B cell (primary cell): ENCODE measurements at regions of chr1 and their contacts with region 1.

Region 1: DNA sequence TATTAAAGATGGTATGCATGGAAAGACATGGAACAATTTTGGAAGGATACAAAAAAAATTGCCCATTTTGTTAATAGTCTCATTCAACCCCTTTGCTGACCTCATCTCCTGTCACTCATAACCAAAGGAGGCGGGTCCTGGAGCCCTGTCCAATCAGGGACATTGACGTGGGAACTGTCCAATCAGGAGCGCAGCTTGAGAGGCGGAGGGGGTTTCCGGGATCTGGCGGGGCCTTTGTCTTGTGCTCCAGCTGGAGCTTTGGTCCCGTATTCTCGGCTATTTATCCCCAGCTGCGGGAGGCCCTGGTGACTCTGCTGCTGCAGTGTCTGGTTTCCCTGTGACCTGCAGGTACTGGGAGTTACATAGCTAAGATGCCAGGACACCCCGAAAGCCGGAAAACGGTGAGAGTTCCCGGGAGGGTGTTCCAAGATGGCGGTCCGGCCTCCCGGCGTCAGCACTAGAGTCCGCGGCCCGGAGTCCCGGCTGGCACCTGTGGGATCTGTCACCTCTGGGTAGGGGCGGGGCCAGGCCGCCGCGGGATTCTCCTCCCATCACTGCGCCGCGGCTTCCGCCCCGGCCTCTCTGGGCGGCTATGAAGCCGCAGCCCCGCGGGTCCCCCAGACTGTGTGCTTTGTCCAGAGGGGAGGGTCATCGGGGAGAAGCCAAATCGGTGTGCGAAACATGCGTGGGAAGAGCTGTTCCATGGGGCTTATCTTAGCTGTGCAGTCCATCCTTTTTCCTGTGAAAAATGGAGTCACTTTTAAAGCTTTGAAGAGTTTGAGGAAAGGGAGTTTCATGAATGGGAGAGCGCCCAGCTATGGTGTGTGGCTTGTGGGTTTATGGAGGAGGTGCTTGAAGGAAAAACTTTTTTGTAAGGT is at the start of gene ZNF678:
- DNase-seq: peak; percentile 94
- ATAC-seq: peak; percentile 88
- H3K4me3 ChIP-seq: peak within 1 kb of the TSS; percentile 74 to 87 (median 84)
- H3K4me3 Mint-ChIP-seq: peak within 1 kb of the TSS; percentile 98
- H3K27ac ChIP-seq: peak within 1 kb of the TSS; percentile 86 to 96
- H3K27ac Mint-ChIP-seq: peak within 1 kb of the TSS; percentile 93
- H3K4me1 ChIP-seq: peaks cover 22 to 31% of the 10 kb centered on the region in 2 donors
- H3K4me1 Mint-ChIP-seq: peaks cover 52% of the 10 kb centered on the region
- H3K27me3 ChIP-seq: peaks cover 0 to 30% (median 9%) of the 10 kb centered on the region in 4 experiments
- H3K27me3 Mint-ChIP-seq: peaks cover 16% of the 10 kb centered on the region
- CTCF ChIP-seq: no peak
- total RNA-seq, gene ZNF678: 16.0 and 20.3 TPM in 2 replicates

Region 2: GRCh38 chr1:227542143-227543120 is 21.1 kb before region 1 on chr1:
- CTCF ChIA-PET with region 1: interaction called, 21 read pairs
- POLR2A ChIA-PET with region 1: no interaction called
- intact Hi-C with region 1: loop called (anchors 2 kb)
- DNase-seq: peak; percentile 89
- ATAC-seq: peak; percentile 96
- H3K4me3 ChIP-seq: peak overlapping the region; percentile 7 to 69 (median 63)
- H3K4me3 Mint-ChIP-seq: peak overlapping the region; percentile 73
- H3K27ac ChIP-seq: peak overlapping the region in 1 of 2 donors; percentile 16
- H3K27ac Mint-ChIP-seq: no peak overlapping the region
- H3K4me1 ChIP-seq: peaks cover 0 to 16% of the 10 kb centered on the region in 2 donors
- H3K4me1 Mint-ChIP-seq: peaks cover 3% of the 10 kb centered on the region
- H3K27me3 ChIP-seq: no peaks in the 10 kb centered on the region
- H3K27me3 Mint-ChIP-seq: no peaks in the 10 kb centered on the region
- CTCF ChIP-seq: peak; percentile 99

Region 3: GRCh38 chr1:227734856-227735538 is 171.4 kb after region 1 on chr1 and contains the starts of genes JMJD4 and SNAP47:
- CTCF ChIA-PET with region 1: no interaction called
- POLR2A ChIA-PET with region 1: no interaction called
- intact Hi-C with region 1: loop called (anchors 2 kb)
- DNase-seq: peak; percentile 95
- ATAC-seq: peak; percentile 91
- H3K4me3 ChIP-seq: peak within 1 kb of the TSS; percentile 58 to 96 (median 83)
- H3K4me3 Mint-ChIP-seq: peak within 1 kb of the TSS; percentile 91
- H3K27ac ChIP-seq: peak within 1 kb of the TSS; percentile 55 to 90
- H3K27ac Mint-ChIP-seq: peak within 1 kb of the TSS; percentile 87
- H3K4me1 ChIP-seq: peaks cover 12 to 23% of the 10 kb centered on the region in 2 donors
- H3K4me1 Mint-ChIP-seq: peaks cover 36% of the 10 kb centered on the region
- H3K27me3 ChIP-seq: no peaks in the 10 kb centered on the region
- H3K27me3 Mint-ChIP-seq: no peaks in the 10 kb centered on the region
- CTCF ChIP-seq: no peak
- total RNA-seq, gene JMJD4: 30.6 and 30.7 TPM in 2 replicates
- total RNA-seq, gene SNAP47: 34.3 and 34.9 TPM in 2 replicates